Aorta (tissue), 5 donors: ENCODE measurements at regions of chr19 and their contacts with region 1.

Region 1: DNA sequence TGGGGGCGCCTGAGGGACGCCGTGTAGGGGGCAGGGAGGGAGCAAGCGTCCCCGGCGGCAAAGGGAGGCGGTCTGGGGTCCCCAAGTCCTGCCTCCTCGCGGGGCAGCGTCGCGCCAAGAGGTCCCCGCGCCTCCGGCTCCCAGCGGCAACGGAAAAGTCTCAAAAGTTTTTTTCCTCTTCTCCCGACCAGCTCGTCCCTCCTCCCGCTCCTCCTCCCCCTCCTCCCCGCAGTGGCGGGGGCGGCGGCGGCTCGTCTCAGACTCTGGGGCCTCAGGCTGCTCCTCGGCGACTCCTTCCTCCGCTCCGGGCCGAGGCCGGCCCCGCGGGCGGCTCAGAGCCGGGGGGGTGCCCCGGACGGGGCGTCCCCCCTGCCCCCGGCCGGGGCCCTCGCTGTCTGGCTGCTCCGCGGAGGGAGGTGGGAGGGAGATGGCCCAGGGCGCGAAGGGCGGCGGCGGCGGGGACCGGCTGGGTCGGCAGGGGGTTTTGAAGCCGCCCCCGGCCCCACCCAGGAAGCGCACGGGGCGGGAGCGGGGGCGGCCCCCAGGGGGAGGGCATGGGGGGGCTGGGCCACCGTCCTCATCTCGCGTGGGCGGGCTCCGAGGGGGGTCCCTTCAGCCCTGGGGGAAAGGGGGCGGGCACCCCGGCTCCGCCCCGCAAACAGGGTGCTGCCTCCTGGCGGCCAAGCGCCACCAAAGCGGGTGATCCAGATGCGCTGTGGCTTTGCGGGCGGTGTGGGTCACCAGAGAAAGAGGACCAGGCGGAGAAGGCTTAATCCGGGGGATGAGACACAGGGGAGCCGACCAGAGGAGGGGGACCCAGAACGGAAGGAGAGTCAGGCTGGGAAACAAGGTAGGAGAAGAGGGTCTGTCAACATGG is at the start of gene TGFB1:
- DNase-seq: peak; percentile 96 to 97
- ATAC-seq: peak; percentile 91
- H3K4me3 ChIP-seq: peak within 1 kb of the TSS; percentile 34 to 77
- H3K27ac ChIP-seq: peak within 1 kb of the TSS in 1 of 2 donors; percentile 34
- H3K4me1 ChIP-seq: no peaks in the 10 kb centered on the region
- H3K27me3 ChIP-seq: no peaks in the 10 kb centered on the region
- total RNA-seq, gene TGFB1: 81.6 to 97.5 TPM

Region 2: DNA sequence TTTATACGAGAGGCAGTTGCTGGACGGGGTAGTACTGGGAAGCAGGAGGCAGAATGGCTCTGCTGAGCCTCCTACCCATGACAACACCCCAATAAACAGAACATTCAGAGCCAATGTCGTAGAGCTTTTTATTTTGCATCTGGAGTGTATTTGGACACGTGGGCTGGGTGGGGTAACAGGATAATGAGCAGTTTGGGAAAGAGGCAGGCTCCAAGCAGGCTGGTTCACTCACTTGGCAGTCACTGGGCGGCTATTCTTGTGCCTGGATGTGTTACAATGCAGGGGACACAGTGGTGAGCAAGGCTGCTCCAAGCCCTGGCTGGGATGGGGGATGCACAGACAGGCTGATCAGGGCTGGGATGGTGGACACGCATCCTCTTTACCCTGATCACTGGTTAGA is 613.0 kb before region 1 on chr19:
- intact Hi-C with region 1: no loop called
- DNase-seq: no peak
- ATAC-seq: peak; percentile 61
- H3K4me3 ChIP-seq: no peak overlapping the region
- H3K27ac ChIP-seq: no peak overlapping the region
- H3K4me1 ChIP-seq: no peaks in the 10 kb centered on the region
- H3K27me3 ChIP-seq: no peaks in the 10 kb centered on the region

Region 3: DNA sequence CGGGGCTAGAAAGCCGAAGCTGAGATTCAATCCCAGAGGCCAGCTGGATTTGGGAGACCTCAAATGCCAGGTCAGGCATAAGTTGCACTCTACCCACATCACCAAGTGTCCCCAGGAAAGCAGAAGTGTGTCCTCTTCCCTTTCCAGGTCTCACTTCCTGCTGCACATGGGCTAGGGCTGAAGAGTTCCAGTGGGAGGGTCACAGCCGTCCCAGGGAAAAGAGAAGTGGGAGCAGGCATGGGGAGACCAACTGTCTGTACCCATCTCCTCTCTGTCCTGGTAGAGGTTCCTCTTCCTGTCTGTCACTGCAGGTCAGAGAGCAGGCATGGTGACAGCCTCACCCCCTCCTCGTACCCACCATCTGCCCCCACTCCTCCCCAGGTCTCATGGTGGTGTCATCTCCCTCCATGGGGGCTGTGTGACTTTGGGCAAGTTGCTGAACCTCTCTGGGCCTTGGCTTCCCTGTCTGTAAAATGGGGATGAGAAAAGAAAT is 119.9 kb before region 1 on chr19:
- intact Hi-C with region 1: no loop called
- DNase-seq: peak in 1 of 2 donors; percentile 74
- ATAC-seq: no peak
- H3K4me3 ChIP-seq: no peak overlapping the region
- H3K27ac ChIP-seq: no peak overlapping the region
- H3K4me1 ChIP-seq: no peaks in the 10 kb centered on the region
- H3K27me3 ChIP-seq: no peaks in the 10 kb centered on the region

Region 4: GRCh38 chr19:41321600-41322270 is 32.0 kb before region 1 on chr19:
- intact Hi-C with region 1: loop called (anchors 2 to 5 kb)
- DNase-seq: no peak
- ATAC-seq: peak; percentile 19
- H3K4me3 ChIP-seq: no peak overlapping the region
- H3K27ac ChIP-seq: peak overlapping the region in 1 of 2 donors; percentile 11
- H3K4me1 ChIP-seq: no peaks in the 10 kb centered on the region
- H3K27me3 ChIP-seq: no peaks in the 10 kb centered on the region

Region 5: GRCh38 chr19:41332000-41332399 is 21.7 kb before region 1 on chr19:
- intact Hi-C with region 1: no loop called
- DNase-seq: no peak
- ATAC-seq: no peak
- H3K4me3 ChIP-seq: no peak overlapping the region
- H3K27ac ChIP-seq: no peak overlapping the region
- H3K4me1 ChIP-seq: no peaks in the 10 kb centered on the region
- H3K27me3 ChIP-seq: no peaks in the 10 kb centered on the region

Region 6: DNA sequence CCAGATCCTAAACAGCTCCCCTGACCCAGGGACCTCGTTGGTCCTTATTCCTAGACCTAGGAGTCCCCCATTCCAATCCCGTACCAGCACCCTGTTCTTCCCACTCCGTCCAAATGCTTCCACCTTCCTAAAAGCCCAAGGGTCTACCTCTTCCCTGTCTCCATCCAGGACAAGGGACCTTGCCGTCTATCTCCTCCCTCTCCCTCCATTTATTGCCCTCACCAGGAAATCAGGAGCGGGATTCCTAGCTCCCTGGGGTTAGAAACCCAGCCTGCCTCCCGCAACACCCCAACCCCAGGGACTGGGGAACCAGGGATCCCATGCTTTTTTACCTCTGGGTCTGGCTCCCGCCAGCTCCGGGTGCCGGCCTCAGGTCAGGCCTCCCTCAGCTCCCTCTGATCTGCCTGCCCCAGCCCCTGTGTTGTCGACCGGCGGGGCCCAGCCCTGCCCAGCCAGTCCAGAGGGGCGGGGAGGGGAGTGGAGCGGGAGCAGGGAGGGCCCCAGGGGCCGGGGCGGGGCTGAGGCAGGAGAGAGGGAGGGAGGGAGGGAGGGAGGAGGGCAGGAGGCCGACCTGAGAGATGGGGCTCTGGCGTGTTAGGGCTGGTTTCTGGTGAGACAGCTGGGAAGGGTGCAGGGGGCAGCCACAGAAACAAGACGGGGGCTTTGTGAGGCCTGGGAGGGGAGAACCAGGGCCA is 73.4 kb after region 1 on chr19 and contains the start of gene B3GNT8:
- intact Hi-C with region 1: loop called in 1 of 2 experiments (anchors 5 kb)
- DNase-seq: peak; percentile 92 to 94
- ATAC-seq: peak; percentile 94
- H3K4me3 ChIP-seq: peak within 1 kb of the TSS; percentile 33 to 53
- H3K27ac ChIP-seq: peak within 1 kb of the TSS in 1 of 2 donors; percentile 48
- H3K4me1 ChIP-seq: no peaks in the 10 kb centered on the region
- H3K27me3 ChIP-seq: no peaks in the 10 kb centered on the region
- total RNA-seq, gene B3GNT8: 3.2 to 3.9 TPM

Region 7: GRCh38 chr19:41476583-41476982 is 122.9 kb after region 1 on chr19:
- intact Hi-C with region 1: no loop called
- DNase-seq: no peak
- ATAC-seq: no peak
- H3K4me3 ChIP-seq: no peak overlapping the region
- H3K27ac ChIP-seq: no peak overlapping the region
- H3K4me1 ChIP-seq: no peaks in the 10 kb centered on the region
- H3K27me3 ChIP-seq: no peaks in the 10 kb centered on the region